ENCODE measurements at regions of chr15 and their contacts with region 1.

Region 1: DNA sequence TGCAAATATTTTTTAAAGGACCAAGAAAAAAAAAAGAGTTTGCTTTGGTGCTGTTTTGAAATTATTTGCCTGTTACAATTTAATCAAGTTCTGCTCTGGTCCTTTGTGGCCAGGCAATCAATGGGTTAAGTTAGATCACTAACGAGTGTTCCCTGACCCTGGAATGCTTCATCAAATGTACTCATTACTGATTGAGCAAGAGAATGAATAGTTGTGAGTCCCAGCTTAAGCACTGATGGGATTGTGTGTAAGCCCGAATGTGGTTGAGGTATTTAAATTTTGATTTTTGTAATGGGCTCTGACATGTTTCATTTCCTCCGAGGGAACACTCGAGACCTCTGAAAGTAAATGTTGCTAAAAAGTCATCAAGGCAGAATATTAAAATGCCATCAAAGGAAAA is 699.1 kb downstream of the MCTP2 start:
- DNase-seq: peak; percentile 28
- H3K4me3 ChIP-seq: no peak overlapping the region
- H3K27ac ChIP-seq: no peak overlapping the region
- H3K4me1 ChIP-seq: peaks cover 5% of the 10 kb centered on the region
- H3K27me3 ChIP-seq: no peaks in the 10 kb centered on the region
- CTCF ChIP-seq: no peak

Region 2: GRCh38 chr15:94858011-94858740 is 72.3 kb before region 1 on chr15:
- CTCF ChIA-PET with region 1: no interaction called
- dilution Hi-C with region 1: no loop called
- in situ Hi-C with region 1: no loop called
- intact Hi-C with region 1: no loop called
- DNase-seq: no peak
- H3K4me3 ChIP-seq: peak overlapping the region in 2 of 3 experiments; percentile 10 to 35
- H3K27ac ChIP-seq: no peak overlapping the region
- H3K4me1 ChIP-seq: peaks cover 3% of the 10 kb centered on the region
- H3K27me3 ChIP-seq: no peaks in the 10 kb centered on the region
- CTCF ChIP-seq: no peak

Region 3: DNA sequence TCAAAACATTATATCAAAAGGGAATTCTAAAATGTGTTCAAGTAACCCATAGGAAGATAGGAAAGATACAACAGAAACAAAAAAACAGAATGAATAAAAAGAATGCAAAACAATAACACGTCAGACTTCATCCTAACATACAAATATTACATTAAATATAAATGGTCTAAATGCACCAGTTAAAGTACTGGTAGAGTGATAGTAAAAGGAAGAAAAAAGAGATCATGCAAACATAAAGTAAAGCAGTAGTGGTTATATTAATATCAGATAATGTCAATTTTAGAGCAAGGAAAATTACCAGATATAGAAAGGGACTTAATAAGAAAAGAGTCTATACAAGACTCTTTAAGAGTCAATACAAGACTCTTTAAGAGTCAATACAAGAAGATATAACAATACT is 56.6 kb after region 1 on chr15:
- CTCF ChIA-PET with region 1: no interaction called
- dilution Hi-C with region 1: loop called (anchors 5 kb)
- in situ Hi-C with region 1: no loop called
- intact Hi-C with region 1: no loop called
- DNase-seq: no peak
- H3K4me3 ChIP-seq: no peak overlapping the region
- H3K27ac ChIP-seq: no peak overlapping the region
- H3K4me1 ChIP-seq: no peaks in the 10 kb centered on the region
- H3K27me3 ChIP-seq: no peaks in the 10 kb centered on the region
- CTCF ChIP-seq: no peak